ENCODE measurements at regions of chr13 and their contacts with region 1.

Region 1: GRCh38 chr13:105591277-105591676 is 944.2 kb downstream of the EFNB2 start:
- DNase-seq: no peak

Region 2: GRCh38 chr13:104002216-104002615 is 1589.1 kb before region 1 on chr13:
- intact Hi-C with region 1: loop called in 1 of 2 experiments (anchors 5 kb)
- DNase-seq: no peak

Region 3: DNA sequence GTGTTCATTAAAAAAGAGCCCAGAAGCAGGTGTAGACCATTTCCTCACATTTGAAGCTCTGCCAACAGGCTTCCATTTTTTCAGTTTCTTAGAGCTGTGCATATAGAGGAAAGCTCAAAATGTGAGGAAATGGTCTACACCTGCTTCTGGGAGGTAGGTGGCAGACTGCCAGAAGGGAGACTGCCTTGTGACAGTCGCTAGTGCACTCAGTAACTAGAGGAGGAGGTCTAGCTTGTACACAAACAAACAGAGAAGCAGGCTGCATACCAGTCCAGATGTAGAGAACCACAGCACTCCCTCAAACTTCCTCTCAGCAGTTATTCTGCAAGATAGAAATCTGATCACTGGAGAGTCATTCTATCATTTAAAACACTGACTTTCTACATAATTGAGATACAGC is 144.0 kb after region 1 on chr13:
- intact Hi-C with region 1: no loop called
- DNase-seq: no peak

Measured in posterior vena cava (tissue), 2 donors.